ENCODE measurements at regions of chr1 and their contacts with region 1.

Region 1: DNA sequence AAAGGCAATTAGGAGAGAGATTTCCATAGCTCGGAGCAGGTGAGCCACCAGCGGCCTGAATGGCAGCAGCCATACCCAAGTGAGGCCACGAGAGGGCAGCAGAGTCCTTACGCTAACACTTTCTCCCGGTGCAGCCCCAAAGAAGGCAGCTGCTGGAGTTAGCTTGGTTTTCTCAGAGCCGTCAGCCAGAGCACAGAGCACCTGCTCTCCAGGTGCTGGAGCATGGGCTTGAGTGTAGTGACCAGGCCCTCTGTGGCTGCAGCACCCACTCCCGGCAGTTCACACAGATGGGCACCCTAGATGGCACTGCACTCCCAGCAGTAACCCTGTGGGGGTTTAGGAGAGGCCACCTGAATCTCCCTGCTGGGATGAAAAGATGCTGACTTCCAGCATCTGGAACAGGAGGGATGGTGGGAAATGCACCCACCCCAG is 45.8 kb downstream of the TMCC2 start:
- DNase-seq: peak; percentile 90
- CTCF ChIP-seq: peak; percentile 91

Region 2: DNA sequence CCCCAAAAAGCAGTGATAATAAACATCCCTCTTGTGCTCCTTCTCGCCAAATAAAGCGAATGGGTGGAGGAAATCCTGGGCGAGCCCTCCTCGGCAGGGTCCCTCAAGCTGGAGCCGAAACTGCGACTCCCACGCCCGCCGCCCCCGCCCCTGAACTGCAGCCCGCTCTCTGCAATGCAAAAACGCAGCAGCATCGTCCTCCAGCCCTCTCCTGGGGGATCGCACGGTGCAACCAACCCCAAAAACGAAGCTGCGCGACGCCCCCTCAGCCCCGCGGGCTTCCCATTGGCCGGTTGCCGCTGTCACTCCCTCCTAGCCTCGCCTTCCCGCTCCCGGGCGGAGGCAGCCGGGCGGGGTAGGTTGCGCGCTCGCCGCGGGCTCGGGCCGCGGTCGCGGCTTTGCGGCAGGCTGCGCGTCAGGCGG is 46.0 kb before region 1 on chr1 and contains the start of gene TMCC2:
- CTCF ChIA-PET with region 1: interaction called, 20 read pairs
- POLR2A ChIA-PET with region 1: no interaction called
- DNase-seq: peak; percentile 94
- CTCF ChIP-seq: no peak

Region 3: GRCh38 chr1:205237526-205238484 is 35.8 kb before region 1 on chr1:
- CTCF ChIA-PET with region 1: interaction called, 12 read pairs
- POLR2A ChIA-PET with region 1: no interaction called
- DNase-seq: peak; percentile 57
- CTCF ChIP-seq: no peak

Region 4: DNA sequence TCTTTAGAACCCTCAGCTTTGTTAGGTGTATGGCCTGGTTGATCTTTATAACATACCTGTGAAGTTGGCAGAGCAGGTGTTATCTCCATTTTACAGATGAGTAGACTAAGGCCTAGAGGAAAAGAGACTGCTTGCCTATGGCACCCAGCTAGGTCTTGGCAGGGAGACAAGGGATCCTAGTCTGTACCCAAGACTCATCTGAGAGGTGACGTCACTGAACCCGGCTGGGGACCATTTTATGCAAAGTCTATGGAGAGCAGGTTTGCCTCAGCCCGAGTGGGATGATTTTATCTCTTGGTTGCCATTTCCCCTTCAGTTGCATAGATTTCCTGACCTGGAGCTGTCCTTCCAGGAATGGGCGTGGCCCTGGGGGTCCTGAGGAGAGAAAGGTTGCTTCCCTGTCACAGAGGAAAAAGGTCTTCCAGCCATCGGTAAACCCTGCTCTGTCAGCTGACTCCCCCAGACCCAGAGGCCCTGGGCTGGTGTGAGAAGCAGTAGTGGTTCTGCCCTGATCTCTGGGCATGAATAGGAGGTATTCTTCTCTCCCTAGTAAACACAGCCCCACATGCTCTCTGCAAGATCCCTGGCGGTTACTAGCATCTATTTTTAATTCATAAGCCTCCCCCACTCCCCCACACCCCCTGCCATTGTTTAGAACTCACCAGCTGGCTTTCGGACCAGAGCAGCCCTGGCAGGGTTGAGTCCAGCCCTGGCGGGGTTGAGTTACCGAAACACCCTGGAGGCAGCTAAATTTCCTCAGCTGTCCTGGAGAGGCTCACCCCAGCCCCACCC is 26.2 kb before region 1 on chr1:
- CTCF ChIA-PET with region 1: interaction called, 246 read pairs
- POLR2A ChIA-PET with region 1: no interaction called
- DNase-seq: no peak
- CTCF ChIP-seq: no peak

Region 5: GRCh38 chr1:205284343-205285144 is 11.0 kb after region 1 on chr1:
- CTCF ChIA-PET with region 1: interaction called, 254 read pairs
- POLR2A ChIA-PET with region 1: no interaction called
- DNase-seq: peak; percentile 75
- CTCF ChIP-seq: no peak

Region 6: DNA sequence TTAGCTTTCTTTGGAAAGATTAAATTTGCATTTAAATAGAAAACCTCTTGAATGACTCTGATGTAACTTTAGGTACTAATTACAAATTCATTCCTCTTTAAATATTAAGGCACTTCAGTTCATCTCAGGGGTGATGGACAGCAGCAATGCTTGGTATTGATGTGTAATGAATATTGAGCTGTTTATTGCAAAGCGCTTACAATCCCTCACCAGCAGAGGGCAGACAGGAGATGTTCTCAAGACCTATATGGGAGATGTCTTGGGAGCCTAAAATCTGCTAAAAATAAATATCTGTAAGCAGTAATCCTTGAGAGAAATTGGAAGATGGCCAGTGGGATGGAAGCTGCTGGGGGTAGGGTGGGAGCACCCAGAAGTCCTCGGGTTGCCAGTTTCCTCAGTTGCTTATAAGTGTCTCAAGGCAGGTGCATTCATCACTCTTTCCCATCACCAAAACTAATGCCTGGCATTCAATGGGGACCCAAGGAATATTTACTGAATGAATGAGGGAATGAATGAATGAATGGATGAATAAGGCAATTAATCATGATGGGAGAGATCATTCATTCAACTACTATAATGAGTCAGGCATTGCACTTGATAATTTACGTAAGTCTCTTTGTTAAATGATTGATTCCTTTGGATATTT is 80.8 kb after region 1 on chr1:
- CTCF ChIA-PET with region 1: interaction called, 23 read pairs
- POLR2A ChIA-PET with region 1: no interaction called
- DNase-seq: peak; percentile 60
- CTCF ChIP-seq: peak; percentile 87